ENCODE measurements at regions of chr1 and their contacts with region 1.

Region 1: DNA sequence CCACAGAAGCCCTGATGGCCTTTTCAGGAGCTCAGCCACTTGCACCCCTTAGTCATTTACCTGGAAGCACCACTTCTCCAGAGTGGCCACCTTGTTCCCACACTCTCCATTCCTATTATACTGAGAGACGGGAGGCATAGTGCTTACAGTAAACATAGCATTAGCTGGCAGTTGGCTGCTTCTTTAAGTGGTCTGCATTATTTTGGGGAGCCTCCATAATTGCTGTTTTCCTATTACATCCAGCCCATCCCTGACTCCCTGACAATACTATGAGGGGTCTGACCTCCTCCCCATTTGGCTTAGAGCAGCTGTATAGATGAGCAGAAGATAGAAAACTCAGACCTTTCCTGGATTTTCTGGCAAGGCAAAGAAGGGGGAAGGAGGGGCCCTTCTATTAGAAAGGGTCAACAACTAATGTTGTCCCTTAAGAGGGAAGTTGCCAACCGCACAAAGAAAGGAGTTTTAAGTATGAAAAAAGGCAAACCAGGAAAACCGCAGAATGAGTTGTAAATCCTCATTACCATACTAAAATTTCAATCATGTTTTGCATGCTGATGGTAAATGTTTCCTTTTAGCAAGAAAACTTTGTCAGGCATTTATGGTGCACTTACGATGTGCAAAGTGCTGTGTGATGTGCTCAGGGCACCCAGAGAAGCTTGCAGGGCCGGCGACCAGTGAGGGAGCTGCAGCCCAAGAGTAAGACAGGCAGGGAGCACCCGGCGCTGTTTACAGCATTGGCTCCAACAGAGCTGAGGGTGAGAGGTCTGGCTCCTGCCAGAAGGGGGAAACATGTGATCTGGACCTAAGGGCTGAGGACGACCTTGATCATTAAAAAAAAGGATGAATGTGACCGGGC is 167.3 kb downstream of the ZZZ3 start:
- DNase-seq: peak; percentile 25 to 87 (median 70)

Region 2: DNA sequence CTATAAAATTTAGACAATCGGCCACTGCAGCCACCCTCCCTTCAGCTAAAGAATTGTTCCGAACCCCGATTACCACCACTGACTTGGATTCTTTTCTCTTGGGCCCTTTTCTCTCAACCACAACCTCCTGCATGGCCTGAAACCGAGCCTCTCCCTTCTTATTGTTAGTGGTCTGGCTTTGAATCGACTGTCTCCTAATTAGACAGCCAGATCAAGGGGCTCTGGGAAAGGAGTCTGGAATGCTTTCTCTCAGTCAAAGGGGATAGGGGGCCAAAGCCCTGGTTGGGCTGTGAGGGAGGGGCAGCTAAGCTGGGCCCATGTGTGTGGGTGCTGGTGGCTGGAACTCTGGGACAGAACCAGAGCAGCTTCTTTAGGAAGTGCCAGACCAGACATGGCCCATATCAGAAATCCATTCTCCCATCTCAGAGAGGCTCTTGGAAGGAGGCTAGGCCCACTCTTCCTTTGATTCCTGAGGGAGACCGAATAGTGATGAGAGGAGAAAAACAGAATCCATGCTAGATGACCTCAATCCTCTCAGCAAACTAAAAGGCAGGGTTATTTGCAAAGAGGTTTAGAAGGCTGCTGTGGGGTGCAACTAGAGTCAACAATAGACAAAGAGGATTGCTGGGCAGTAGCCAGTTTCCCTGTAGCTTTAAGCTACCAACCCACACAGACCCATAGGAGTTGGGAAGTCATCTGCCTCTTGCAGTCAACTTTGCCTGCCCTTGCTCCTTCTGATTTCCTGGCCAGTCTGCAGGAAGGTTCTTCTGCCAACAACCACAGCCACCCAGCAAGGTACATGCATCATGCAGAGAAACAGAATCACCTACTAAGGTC is 115.7 kb before region 1 on chr1:
- intact Hi-C with region 1: loop called (anchors 5 kb)
- DNase-seq: peak in 38 of 42 donors; percentile 20 to 90 (median 71)

Region 3: DNA sequence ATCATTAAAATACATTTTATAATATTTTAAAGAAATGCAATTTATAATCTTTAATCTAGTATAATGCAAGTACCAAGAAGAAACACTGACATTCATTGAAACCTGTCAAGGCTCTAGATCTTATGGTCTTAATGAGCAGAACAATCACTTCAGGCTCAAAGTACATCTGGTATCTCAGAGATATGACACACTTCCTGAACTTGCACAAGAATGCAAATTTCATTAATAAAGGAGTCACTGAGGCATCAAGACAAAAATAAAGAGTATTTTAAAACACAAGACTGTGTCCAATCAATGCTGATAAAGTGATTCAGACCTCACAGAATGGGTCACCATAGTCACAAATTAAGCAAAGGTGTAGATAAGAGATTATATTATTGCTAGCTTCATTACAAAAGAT is 55.3 kb before region 1 on chr1:
- intact Hi-C with region 1: no loop called
- DNase-seq: no peak

Region 4: DNA sequence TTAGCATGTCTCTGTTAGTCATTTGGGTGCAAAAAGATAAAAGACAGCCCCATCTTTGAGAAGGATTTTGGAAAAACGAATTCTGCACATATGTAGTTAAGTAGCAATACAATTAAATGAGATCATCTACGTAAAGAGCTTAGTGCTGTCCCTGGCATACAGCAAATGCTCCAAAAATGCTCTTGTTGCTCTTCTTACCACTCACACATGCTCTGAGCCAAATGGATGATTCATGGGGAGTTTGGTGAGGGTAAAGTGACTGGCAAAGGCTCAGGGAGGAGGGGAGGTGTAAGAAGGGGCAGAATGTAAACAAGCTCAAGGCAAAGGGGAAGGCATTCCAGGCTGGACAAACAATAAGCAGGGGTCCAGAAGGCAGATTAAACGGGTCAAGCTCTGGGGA is 41.5 kb before region 1 on chr1:
- intact Hi-C with region 1: no loop called
- DNase-seq: peak in 1 of 42 donors; percentile 27

Measured in head of caudate nucleus (tissue), 42 donors.